PC-3 (cell line): ENCODE measurements at regions of chr2 and their contacts with region 1.

Region 1: GRCh38 chr2:195092341-195092740 is 564.7 kb upstream of the SLC39A10 start:
- DNase-seq: no peak
- ATAC-seq: no peak
- H3K4me3 ChIP-seq: no peak overlapping the region
- H3K27ac ChIP-seq: no peak overlapping the region
- H3K4me1 ChIP-seq: no peaks in the 10 kb centered on the region
- H3K27me3 ChIP-seq: no peaks in the 10 kb centered on the region
- CTCF ChIP-seq: 0 out of 2 replicates have a peak, but pooled peaks have one; percentile 21

Region 2: DNA sequence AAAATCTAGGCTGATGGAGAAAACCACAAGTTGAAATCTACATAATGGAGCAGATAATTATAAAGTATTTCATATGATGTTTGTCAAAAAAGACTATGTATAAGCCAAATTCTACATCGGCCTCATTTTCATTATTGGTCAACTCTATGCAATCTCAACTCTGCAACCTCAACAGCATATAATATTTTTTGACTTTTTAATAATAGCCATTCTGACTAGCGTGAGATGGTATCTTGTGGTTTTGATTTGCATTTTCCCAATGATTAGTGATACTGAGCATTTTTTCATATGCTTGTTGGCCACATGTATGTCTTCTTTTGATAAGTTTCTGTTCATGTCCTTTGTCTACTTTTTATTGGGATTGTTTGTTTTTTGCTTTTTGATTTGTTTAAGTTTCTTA is 68.6 kb after region 1 on chr2:
- CTCF ChIA-PET with region 1: no interaction called
- POLR2A ChIA-PET with region 1: no interaction called
- intact Hi-C with region 1: no loop called
- DNase-seq: no peak
- ATAC-seq: no peak
- H3K4me3 ChIP-seq: no peak overlapping the region
- H3K27ac ChIP-seq: no peak overlapping the region
- H3K4me1 ChIP-seq: no peaks in the 10 kb centered on the region
- H3K27me3 ChIP-seq: no peaks in the 10 kb centered on the region
- CTCF ChIP-seq: no peak

Region 3: DNA sequence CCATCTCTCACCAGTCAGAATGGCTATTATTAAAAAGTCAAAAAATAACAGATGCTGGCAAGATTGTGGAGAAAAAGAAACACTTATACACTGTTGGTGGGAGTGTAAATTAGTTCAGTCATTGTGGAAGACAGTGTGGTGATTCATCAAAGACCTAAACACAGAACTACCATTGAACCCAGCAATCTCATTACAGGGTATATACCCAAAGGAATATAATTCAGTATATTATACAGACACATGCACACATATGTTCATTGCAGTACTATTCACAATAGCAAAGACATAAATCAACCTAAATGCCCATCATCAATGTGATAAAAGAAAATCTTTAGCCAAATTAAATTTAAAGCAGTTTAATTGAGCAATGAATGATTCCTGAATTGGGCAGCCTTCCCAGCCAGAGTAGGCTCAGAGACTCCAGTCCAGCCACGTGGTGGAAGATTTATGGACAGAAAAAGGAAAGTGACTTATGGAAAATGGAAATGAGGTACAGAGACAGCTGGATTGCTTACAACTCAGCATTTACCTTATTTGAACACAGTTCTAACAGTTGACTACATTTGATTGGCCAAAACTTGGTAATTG is 187.6 kb after region 1 on chr2:
- CTCF ChIA-PET with region 1: interaction called, 20 read pairs
- POLR2A ChIA-PET with region 1: no interaction called
- intact Hi-C with region 1: no loop called
- DNase-seq: no peak
- ATAC-seq: no peak
- H3K4me3 ChIP-seq: no peak overlapping the region
- H3K27ac ChIP-seq: no peak overlapping the region
- H3K4me1 ChIP-seq: no peaks in the 10 kb centered on the region
- H3K27me3 ChIP-seq: no peaks in the 10 kb centered on the region
- CTCF ChIP-seq: no peak